Right ventricle myocardium inferior (tissue), 1 donor: ENCODE measurements at regions of chr2 and their contacts with region 1.

Region 1: DNA sequence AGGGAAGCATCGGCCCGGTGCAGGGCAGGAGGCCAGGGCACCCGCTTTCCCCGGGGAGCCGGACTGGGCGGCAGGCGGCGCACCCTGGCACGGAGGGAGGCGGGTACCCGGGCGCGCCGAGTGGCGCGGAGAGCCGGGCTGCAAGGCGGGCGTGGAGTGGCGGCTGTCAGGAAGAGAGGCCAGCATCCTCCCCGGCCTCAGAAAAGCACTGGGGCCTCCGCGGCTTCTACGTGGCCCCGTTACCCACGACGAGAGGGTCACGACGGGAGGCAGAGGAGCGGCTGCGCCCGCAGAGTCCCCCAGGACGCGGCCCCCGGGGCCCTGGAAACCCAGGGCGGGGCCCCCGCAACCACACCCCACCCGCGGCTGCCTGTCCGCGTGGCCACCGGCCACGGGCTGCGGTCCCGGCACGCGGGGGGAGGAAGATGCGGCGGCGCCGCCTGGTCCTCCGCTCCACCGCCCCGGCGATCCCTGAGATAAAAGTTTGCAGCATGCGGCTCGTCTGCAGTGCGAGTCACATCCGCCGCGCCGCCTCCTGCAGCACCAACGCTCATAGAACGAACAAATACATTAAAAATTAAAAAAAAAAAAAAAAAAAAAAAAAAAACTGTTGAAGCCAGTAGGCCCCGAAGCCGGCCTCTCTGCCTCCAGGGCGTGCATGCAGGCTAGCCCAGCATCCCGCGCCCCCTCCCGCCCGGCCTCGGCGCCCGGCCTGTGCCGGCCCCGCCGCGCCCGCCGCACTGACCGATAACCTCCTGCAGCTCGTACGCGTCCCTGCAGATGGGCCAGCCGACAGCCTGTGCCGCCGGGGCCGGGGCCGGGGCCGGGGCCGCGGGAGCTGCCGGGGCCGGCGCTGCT is 683 bp downstream of the STK39 start:
- DNase-seq: peak; percentile 88
- ATAC-seq: peak; percentile 77

Region 2: DNA sequence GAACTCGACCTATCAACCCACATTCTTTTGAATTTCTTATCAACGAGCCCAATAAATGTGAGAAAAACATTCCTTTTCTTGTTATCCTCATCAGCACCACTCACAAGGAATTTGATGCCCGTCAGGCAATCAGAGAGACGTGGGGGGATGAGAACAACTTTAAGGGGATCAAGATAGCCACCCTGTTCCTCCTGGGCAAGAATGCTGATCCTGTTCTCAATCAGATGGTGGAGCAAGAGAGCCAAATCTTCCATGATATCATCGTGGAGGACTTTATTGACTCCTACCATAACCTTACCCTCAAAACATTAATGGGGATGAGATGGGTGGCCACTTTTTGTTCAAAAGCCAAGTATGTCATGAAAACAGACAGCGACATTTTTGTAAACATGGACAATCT is 377.5 kb before region 1 on chr2:
- intact Hi-C with region 1: no loop called
- DNase-seq: no peak
- ATAC-seq: no peak

Region 3: GRCh38 chr2:168136392-168136977 is 110.2 kb before region 1 on chr2:
- intact Hi-C with region 1: loop called (anchors 2 kb)
- DNase-seq: no peak
- ATAC-seq: no peak

Region 4: DNA sequence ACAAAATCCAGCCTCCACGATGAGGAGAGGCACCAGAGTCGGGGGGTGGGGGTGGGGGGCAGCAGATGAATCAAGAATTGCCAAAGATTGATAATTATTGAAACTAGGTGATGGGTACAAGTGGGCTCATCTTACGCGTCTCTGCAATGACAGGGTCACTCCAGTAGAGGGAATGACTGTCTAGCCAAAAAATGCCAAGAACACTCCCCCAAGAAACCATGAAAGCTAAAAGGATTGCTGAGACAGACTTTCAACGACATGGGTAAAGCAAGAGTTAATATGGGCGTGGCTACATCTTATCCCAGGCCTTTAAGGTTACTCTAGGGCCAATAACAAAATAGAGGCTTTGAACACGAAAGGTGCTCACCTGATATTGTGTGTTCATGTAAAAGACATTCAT is 85.8 kb before region 1 on chr2:
- intact Hi-C with region 1: loop called (anchors 5 kb)
- DNase-seq: no peak
- ATAC-seq: no peak

Region 5: DNA sequence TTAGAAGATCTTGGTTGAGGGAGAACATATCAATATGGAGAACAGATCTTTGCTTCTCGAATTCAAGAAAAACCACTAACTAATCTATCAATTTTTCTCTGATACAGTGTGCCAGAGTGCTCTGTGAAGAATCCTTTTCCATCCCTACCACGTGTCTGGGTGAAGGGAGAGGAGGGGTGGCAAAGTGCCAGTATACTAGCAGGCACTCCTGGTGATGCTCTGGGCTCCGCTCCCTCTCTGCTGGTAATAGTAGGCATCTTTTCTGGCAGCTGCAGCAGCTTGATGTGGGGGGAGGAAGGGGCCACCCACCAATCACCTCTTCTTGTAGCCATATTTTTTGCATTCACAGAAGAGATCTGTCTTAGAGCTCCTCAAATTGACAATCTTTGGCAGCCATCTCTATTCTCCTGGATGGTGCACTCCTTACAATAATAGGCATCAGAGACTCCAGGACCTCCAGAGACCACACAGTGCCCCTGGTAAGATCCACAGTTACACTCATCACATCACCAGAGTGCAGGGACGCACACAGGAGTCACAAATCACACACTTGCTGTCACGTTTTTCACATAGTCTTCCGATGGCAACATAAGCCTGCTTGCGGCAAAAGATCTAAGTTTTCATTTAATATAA is 15.0 kb before region 1 on chr2:
- intact Hi-C with region 1: no loop called
- DNase-seq: no peak
- ATAC-seq: peak; percentile 64

Region 6: DNA sequence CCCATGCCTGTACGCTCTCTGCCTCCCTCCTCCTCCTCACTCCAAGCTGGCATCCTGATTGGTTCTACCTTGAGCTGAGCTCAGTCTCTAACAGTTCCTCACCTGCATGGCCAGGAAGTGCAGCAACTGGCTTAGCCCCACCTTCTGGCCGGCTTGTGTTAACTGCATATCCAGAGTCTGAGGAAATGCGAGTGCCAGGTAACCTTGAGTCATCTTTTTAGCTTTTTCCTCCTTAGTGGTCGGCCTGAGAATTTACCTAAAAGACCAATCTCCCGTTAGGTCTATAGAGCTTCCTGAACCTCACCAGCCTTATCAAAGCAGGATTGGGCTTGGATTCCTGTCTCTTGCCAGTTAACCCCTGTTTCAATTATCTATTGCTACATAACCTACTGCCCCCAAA is 90.2 kb after region 1 on chr2:
- intact Hi-C with region 1: loop called (anchors 5 kb)
- DNase-seq: no peak
- ATAC-seq: no peak

Region 7: DNA sequence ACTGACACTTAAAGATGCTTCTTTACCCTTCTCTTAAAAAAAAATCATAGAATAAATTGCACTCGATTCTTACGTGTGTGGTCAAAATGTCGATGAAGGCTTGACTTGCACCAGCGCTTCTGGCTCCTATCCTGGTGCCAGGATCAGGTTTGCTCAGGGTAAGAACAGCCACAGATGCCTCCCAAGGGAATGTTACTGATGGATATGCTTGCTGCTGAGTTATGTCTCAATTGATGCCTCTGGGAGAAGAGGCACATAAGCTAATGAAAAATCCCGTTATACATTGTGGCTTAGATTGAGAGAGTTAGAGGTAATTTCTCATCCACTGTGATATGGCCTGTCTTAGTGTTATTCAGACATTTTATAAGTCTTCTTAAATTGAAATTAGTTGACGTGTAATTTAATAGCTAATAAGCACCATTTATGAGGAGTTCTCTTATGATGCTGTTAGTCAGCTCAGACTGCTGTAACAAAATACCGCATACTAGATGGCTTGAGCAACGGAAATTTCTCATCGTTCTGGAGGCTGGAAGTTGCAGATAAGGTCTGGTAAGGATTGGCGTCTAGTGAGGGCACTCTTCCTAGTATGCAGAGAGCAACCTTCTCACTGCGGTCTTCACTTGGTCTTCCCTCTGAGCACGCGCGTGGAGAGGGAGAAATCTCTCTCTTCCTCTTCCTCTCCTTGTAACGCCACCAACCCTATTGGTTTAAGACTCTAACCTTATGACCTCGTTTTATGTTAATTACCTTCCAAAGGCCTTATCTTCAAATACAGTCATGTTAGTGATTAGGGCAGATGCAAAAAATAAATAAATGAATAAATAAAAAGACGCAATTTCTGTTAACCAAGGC is 439.1 kb after region 1 on chr2:
- intact Hi-C with region 1: no loop called
- DNase-seq: no peak
- ATAC-seq: peak; percentile 44

Region 8: GRCh38 chr2:168758970-168759820 is 512.5 kb after region 1 on chr2:
- intact Hi-C with region 1: loop called (anchors 5 kb)
- DNase-seq: no peak
- ATAC-seq: peak; percentile 58